ENCODE measurements at regions of chr4 and their contacts with region 1.

Region 1: GRCh38 chr4:2755837-2756694 is at the start of gene TNIP2:
- DNase-seq: peak; percentile 83
- ATAC-seq: peak; percentile 79
- H3K4me3 Mint-ChIP-seq: peak within 1 kb of the TSS; percentile 73
- H3K27ac Mint-ChIP-seq: peak within 1 kb of the TSS; percentile 32
- H3K4me1 Mint-ChIP-seq: peaks cover 22% of the 10 kb centered on the region
- H3K27me3 Mint-ChIP-seq: no peaks in the 10 kb centered on the region
- CTCF ChIP-seq: no peak
- total RNA-seq, gene TNIP2: 39.3 to 44.4 TPM (median 41.5 TPM) in 3 replicates

Region 2: GRCh38 chr4:2817701-2818350 is 61.8 kb after region 1 on chr4:
- CTCF ChIA-PET with region 1: interaction called, 10 read pairs
- POLR2A ChIA-PET with region 1: no interaction called
- DNase-seq: peak; percentile 65
- ATAC-seq: peak; percentile 66
- H3K4me3 Mint-ChIP-seq: peak overlapping the region; percentile 68
- H3K27ac Mint-ChIP-seq: no peak overlapping the region
- H3K4me1 Mint-ChIP-seq: peaks cover 22% of the 10 kb centered on the region
- H3K27me3 Mint-ChIP-seq: peaks cover 10% of the 10 kb centered on the region
- CTCF ChIP-seq: no peak

Measured in WTC11 (cell line).